ENCODE measurements at regions of chr1 and their contacts with region 1.

Region 1: GRCh38 chr1:175035865-175036264 is 12.6 kb upstream of the MRPS14 start:
- DNase-seq: no peak
- H3K4me3 ChIP-seq: no peak overlapping the region
- H3K27ac ChIP-seq: no peak overlapping the region
- H3K4me1 ChIP-seq: no peaks in the 10 kb centered on the region
- H3K27me3 ChIP-seq: no peaks in the 10 kb centered on the region
- CTCF ChIP-seq: no peak
- EP300 ChIP-seq: no peak
- POLR2A ChIP-seq: no peak

Region 2: GRCh38 chr1:174809755-174810280 is 226.0 kb before region 1 on chr1:
- intact Hi-C with region 1: no loop called
- DNase-seq: no peak
- H3K4me3 ChIP-seq: no peak overlapping the region
- H3K27ac ChIP-seq: no peak overlapping the region
- H3K4me1 ChIP-seq: peaks cover 0 to 3% (median 0%) of the 10 kb centered on the region in 4 donors
- H3K27me3 ChIP-seq: no peaks in the 10 kb centered on the region
- CTCF ChIP-seq: no peak
- EP300 ChIP-seq: no peak
- POLR2A ChIP-seq: no peak

Region 3: DNA sequence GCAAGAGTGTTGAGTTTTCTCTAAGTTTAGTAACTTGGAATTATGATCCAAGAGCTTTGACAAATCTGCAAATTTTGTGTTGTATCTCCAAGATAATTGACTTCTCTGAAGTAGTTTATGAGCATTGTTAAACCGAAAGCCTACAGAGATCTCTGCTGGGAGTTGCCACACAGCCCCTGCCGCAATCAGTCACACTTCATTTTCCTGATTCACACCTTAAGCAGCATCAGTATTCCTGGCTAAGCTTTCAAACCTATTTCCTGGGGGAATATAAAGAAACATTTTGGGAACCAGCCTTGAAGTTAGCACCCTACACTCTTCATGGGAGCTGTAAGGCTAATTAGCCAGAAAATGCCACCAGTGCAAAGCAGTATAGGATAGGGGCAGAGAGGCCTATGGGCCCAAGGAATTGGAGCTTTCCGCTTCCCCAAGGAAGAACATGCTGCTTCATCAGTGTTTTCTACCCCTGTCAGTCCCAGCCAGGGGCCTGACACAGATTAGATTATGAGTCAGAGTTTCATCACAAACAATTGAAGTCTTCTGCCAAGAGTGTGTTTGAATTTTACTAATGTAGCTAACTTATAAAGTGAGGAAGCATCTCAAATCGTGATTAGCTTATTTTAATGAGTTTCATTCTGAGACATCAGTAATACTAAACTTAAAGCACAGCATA is 59.3 kb before region 1 on chr1:
- intact Hi-C with region 1: no loop called
- DNase-seq: no peak
- H3K4me3 ChIP-seq: no peak overlapping the region
- H3K27ac ChIP-seq: peak overlapping the region in 1 of 5 donors; percentile 6
- H3K4me1 ChIP-seq: peaks cover 4 to 15% (median 8%) of the 10 kb centered on the region in 4 donors
- H3K27me3 ChIP-seq: no peaks in the 10 kb centered on the region
- CTCF ChIP-seq: no peak
- EP300 ChIP-seq: no peak
- POLR2A ChIP-seq: no peak

Region 4: GRCh38 chr1:175129997-175130648 is 94.3 kb after region 1 on chr1:
- intact Hi-C with region 1: loop called (anchors 5 kb)
- DNase-seq: peak in 1 of 2 donors; percentile 24
- H3K4me3 ChIP-seq: no peak overlapping the region
- H3K27ac ChIP-seq: peak overlapping the region in 4 of 5 donors; percentile 41 to 65 (median 54)
- H3K4me1 ChIP-seq: peaks cover 9 to 74% (median 42%) of the 10 kb centered on the region in 4 donors
- H3K27me3 ChIP-seq: no peaks in the 10 kb centered on the region
- CTCF ChIP-seq: no peak
- EP300 ChIP-seq: no peak
- POLR2A ChIP-seq: no peak

Region 5: GRCh38 chr1:175319418-175320230 is 283.8 kb after region 1 on chr1:
- intact Hi-C with region 1: loop called (anchors 10 kb)
- DNase-seq: peak; percentile 84 to 90
- H3K4me3 ChIP-seq: no peak overlapping the region
- H3K27ac ChIP-seq: peak overlapping the region; percentile 60 to 79 (median 69)
- H3K4me1 ChIP-seq: peaks cover 16 to 23% (median 23%) of the 10 kb centered on the region in 4 donors
- H3K27me3 ChIP-seq: no peaks in the 10 kb centered on the region
- CTCF ChIP-seq: peak in 5 of 7 experiments; percentile 69 to 96 (median 88)
- EP300 ChIP-seq: no peak
- POLR2A ChIP-seq: no peak

Measured in stomach (tissue), 19 donors.